ENCODE measurements at regions of chr12 and their contacts with region 1.

Region 1: GRCh38 chr12:123232807-123233543 is at the starts of genes MPHOSPH9 and MTRFR:
- DNase-seq: peak; percentile 99 to 100 (median 100)
- H3K4me3 ChIP-seq: peak within 1 kb of the TSS; percentile 82 to 99
- H3K4me3 Mint-ChIP-seq: peak within 1 kb of the TSS; percentile 96 to 100 (median 99)
- H3K27ac ChIP-seq: peak within 1 kb of the TSS; percentile 88
- H3K27ac Mint-ChIP-seq: peak within 1 kb of the TSS; percentile 96 to 100 (median 99)
- H3K4me1 ChIP-seq: peaks cover 86% of the 10 kb centered on the region
- H3K4me1 Mint-ChIP-seq: peaks cover 40 to 81% (median 60%) of the 10 kb centered on the region in 4 donors
- H3K27me3 ChIP-seq: no peaks in the 10 kb centered on the region
- H3K27me3 Mint-ChIP-seq: no peaks in the 10 kb centered on the region
- total RNA-seq, gene MPHOSPH9: 57.9 to 62.7 TPM
- total RNA-seq, gene MTRFR: 46.1 to 48.8 TPM

Region 2: GRCh38 chr12:122500685-122501488 is 732.1 kb before region 1 on chr12 and contains the start of gene ZCCHC8:
- CTCF ChIA-PET with region 1: no interaction called
- POLR2A ChIA-PET with region 1: no interaction called
- intact Hi-C with region 1: no loop called
- DNase-seq: peak; percentile 93 to 98 (median 95)
- H3K4me3 ChIP-seq: peak within 1 kb of the TSS; percentile 55 to 80
- H3K4me3 Mint-ChIP-seq: peak within 1 kb of the TSS; percentile 90 to 98 (median 98)
- H3K27ac ChIP-seq: peak within 1 kb of the TSS; percentile 92
- H3K27ac Mint-ChIP-seq: peak within 1 kb of the TSS; percentile 85 to 99 (median 95)
- H3K4me1 ChIP-seq: peaks cover 44% of the 10 kb centered on the region
- H3K4me1 Mint-ChIP-seq: peaks cover 25 to 50% (median 37%) of the 10 kb centered on the region in 4 donors
- H3K27me3 ChIP-seq: no peaks in the 10 kb centered on the region
- H3K27me3 Mint-ChIP-seq: no peaks in the 10 kb centered on the region
- total RNA-seq, gene ZCCHC8: 52.0 to 59.9 TPM

Region 3: GRCh38 chr12:122526683-122527477 is 706.1 kb before region 1 on chr12 and contains the starts of genes KNTC1 and RSRC2:
- CTCF ChIA-PET with region 1: no interaction called
- POLR2A ChIA-PET with region 1: interaction called, 15 read pairs
- intact Hi-C with region 1: no loop called
- DNase-seq: peak; percentile 98 to 99 (median 99)
- H3K4me3 ChIP-seq: peak within 1 kb of the TSS; percentile 85 to 88
- H3K4me3 Mint-ChIP-seq: no peak within 1 kb of the TSS
- H3K27ac ChIP-seq: peak within 1 kb of the TSS; percentile 98
- H3K27ac Mint-ChIP-seq: no peak within 1 kb of the TSS
- H3K4me1 ChIP-seq: peaks cover 52% of the 10 kb centered on the region
- H3K4me1 Mint-ChIP-seq: peaks cover 22 to 37% (median 30%) of the 10 kb centered on the region in 4 donors
- H3K27me3 ChIP-seq: no peaks in the 10 kb centered on the region
- H3K27me3 Mint-ChIP-seq: no peaks in the 10 kb centered on the region
- total RNA-seq, gene KNTC1: 29.7 to 30.9 TPM
- total RNA-seq, gene RSRC2: 138 to 141 TPM

Region 4: GRCh38 chr12:122871851-122872780 is 360.9 kb before region 1 on chr12:
- CTCF ChIA-PET with region 1: no interaction called
- POLR2A ChIA-PET with region 1: interaction called, 10 read pairs
- intact Hi-C with region 1: no loop called
- DNase-seq: peak in 3 of 5 donors; percentile 34 to 40 (median 39)
- H3K4me3 ChIP-seq: peak overlapping the region; percentile 25 to 41
- H3K4me3 Mint-ChIP-seq: peak overlapping the region; percentile 84 to 94 (median 91)
- H3K27ac ChIP-seq: peak overlapping the region; percentile 47
- H3K27ac Mint-ChIP-seq: peak overlapping the region; percentile 62 to 97 (median 94)
- H3K4me1 ChIP-seq: peaks cover 70% of the 10 kb centered on the region
- H3K4me1 Mint-ChIP-seq: peaks cover 48 to 82% (median 63%) of the 10 kb centered on the region in 4 donors
- H3K27me3 ChIP-seq: no peaks in the 10 kb centered on the region
- H3K27me3 Mint-ChIP-seq: no peaks in the 10 kb centered on the region

Region 5: DNA sequence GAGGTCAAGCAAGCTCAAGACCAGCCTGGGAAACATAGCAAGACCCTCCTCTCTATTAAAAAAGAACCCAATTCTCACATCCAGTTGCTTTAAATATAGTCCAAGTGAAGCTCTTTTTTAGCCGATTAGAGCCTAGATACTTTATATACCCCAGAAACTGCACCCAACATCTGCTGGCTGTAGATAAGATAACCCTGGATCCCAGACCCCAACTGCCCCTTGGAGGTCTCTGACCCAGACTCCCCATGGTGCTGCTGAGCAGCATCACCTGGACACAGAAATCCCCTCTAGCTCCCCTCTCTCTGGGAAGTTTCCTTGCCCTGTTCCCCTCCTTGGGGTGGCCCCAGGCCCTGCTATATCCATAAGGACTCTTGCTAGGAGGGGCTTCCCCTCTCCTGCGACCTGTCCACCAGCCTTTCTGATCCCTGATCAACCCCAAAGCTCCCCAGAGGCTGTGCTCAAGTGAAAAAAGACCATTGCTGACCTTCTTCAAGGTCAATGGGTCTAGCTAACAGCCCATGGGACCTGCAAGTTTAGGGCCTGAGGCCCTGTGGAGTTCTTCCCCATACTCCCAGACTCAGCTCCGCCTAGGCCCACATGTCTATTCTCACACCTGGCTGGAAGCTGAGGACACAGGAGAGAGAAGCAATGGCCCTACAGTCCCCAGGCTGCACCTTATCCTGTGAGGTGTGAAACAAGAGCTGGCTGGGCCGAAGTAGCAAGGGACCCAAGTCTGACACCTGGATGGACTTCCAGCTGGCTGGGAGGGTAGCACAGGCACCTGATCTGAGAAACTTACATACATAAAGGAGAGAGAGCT is 196.3 kb before region 1 on chr12:
- CTCF ChIA-PET with region 1: interaction called, 204 read pairs
- POLR2A ChIA-PET with region 1: interaction called, 32 read pairs
- intact Hi-C with region 1: no loop called
- DNase-seq: no peak
- H3K4me3 ChIP-seq: no peak overlapping the region
- H3K4me3 Mint-ChIP-seq: no peak overlapping the region
- H3K27ac ChIP-seq: no peak overlapping the region
- H3K27ac Mint-ChIP-seq: peak overlapping the region in 4 of 7 donors; percentile 2 to 66 (median 24)
- H3K4me1 ChIP-seq: peaks cover 9% of the 10 kb centered on the region
- H3K4me1 Mint-ChIP-seq: peaks cover 8 to 21% (median 14%) of the 10 kb centered on the region in 4 donors
- H3K27me3 ChIP-seq: no peaks in the 10 kb centered on the region
- H3K27me3 Mint-ChIP-seq: no peaks in the 10 kb centered on the region

Region 6: GRCh38 chr12:123150744-123151456 is 82.1 kb before region 1 on chr12 and contains the start of gene PITPNM2:
- CTCF ChIA-PET with region 1: interaction called, 15 read pairs
- POLR2A ChIA-PET with region 1: interaction called, 28 read pairs
- intact Hi-C with region 1: loop called (anchors 1 kb)
- DNase-seq: peak; percentile 49 to 67 (median 63)
- H3K4me3 ChIP-seq: peak within 1 kb of the TSS; percentile 44 to 52
- H3K4me3 Mint-ChIP-seq: peak within 1 kb of the TSS; percentile 80 to 89 (median 86)
- H3K27ac ChIP-seq: peak within 1 kb of the TSS; percentile 34
- H3K27ac Mint-ChIP-seq: peak within 1 kb of the TSS; percentile 51 to 86 (median 73)
- H3K4me1 ChIP-seq: peaks cover 23% of the 10 kb centered on the region
- H3K4me1 Mint-ChIP-seq: peaks cover 17 to 41% (median 25%) of the 10 kb centered on the region in 4 donors
- H3K27me3 ChIP-seq: no peaks in the 10 kb centered on the region
- H3K27me3 Mint-ChIP-seq: no peaks in the 10 kb centered on the region
- total RNA-seq, gene PITPNM2: 15.7 to 16.8 TPM

Region 7: DNA sequence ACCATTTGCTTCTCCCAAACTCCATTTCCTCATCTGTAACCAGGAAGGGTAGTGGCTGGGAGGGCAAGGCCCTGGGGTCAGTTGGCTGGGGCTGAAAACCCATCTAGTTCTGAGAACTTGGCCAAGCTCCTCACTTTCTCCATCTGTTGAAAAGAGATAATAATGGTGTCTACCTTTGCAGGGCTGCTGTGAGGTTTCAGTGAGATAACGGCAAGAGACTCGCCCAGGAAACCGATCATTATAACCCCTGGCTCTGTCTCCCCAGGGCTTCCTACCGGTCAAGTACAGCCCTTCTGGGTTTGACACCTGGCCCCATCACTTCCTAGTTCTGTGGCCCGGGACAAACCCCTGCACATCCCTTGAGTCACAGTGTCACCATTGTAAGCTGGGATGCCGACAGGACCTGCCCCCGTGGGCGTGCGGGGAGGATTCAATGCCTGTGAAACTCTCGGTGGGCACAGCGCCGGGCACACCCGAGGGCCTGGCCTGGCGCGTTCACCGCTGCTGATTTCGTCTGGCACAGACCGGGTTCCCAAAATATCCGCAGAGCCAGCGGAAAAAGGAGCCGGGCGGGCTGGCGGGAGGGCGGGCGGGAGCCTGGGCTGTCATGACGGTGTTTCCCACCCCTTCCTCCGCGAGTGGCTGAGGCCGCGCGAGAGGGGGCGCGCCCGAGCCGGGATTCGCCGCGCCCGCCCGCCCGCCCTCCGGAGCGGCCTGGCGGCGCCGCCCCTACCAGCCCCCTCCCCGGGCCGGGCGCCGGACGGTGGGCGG is 155.4 kb after region 1 on chr12:
- CTCF ChIA-PET with region 1: no interaction called
- POLR2A ChIA-PET with region 1: interaction called, 14 read pairs
- intact Hi-C with region 1: no loop called
- DNase-seq: peak; percentile 76 to 85 (median 79)
- H3K4me3 ChIP-seq: peak overlapping the region; percentile 71 to 84
- H3K4me3 Mint-ChIP-seq: peak overlapping the region; percentile 86 to 92 (median 88)
- H3K27ac ChIP-seq: peak overlapping the region; percentile 70
- H3K27ac Mint-ChIP-seq: peak overlapping the region; percentile 85 to 96 (median 92)
- H3K4me1 ChIP-seq: peaks cover 45% of the 10 kb centered on the region
- H3K4me1 Mint-ChIP-seq: peaks cover 18 to 57% (median 45%) of the 10 kb centered on the region in 4 donors
- H3K27me3 ChIP-seq: no peaks in the 10 kb centered on the region
- H3K27me3 Mint-ChIP-seq: no peaks in the 10 kb centered on the region

Region 8: GRCh38 chr12:123713398-123713797 is 480.4 kb after region 1 on chr12:
- CTCF ChIA-PET with region 1: no interaction called
- POLR2A ChIA-PET with region 1: interaction called, 10 read pairs
- intact Hi-C with region 1: no loop called
- DNase-seq: peak in 2 of 5 donors; percentile 1 to 8
- H3K4me3 ChIP-seq: peak overlapping the region; percentile 27 to 85
- H3K4me3 Mint-ChIP-seq: peak overlapping the region; percentile 84 to 97 (median 90)
- H3K27ac ChIP-seq: peak overlapping the region; percentile 60
- H3K27ac Mint-ChIP-seq: peak overlapping the region; percentile 84 to 93 (median 90)
- H3K4me1 ChIP-seq: peaks cover 34% of the 10 kb centered on the region
- H3K4me1 Mint-ChIP-seq: peaks cover 27 to 40% (median 35%) of the 10 kb centered on the region in 4 donors
- H3K27me3 ChIP-seq: no peaks in the 10 kb centered on the region
- H3K27me3 Mint-ChIP-seq: no peaks in the 10 kb centered on the region